ENCODE measurements at regions of chr12 and their contacts with region 1.

Region 1: DNA sequence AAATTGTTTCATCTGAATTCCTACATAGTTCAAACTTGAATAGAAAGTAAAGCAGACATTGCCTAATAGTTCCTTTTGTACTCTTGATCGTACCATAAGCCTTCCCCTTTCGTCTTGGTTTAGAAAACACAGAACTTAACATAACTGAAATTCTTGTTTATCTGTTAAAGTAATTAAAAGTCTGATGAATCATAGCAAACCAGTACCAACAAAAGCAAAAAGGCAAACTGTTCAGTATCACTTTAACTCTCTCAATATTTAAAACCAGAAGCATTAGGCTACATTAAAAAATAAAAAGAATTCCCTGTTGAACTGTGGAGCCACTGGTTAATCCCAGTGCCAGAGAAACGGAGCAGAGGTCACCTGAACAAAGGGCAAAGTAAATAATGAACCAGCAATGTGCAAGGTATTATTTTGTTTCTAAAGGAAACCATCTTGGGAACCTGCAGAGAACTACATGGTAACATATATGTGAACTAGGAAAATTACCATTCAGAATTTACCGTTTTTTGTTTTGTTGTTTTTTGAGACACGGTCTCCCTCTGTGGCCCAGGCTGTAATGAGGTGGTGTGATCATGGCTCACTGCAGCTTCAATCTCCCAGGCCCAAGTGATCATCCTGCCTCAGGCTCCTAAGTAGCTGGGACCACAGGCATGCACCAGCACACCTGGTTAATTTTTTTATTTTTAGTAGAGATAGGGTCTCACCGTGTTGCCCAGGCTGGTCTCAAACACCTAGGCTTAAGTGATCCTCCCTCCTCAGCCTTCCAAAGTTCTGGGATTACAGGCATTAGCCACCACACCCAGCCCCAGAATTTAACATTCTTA is 17.1 kb upstream of the HIGD1C start:
- DNase-seq: no peak
- H3K4me3 ChIP-seq: no peak overlapping the region
- H3K27ac ChIP-seq: peak overlapping the region; percentile 46 to 78
- H3K4me1 ChIP-seq: peaks cover 30% of the 10 kb centered on the region
- H3K27me3 ChIP-seq: no peaks in the 10 kb centered on the region
- CTCF ChIP-seq: no peak
- POLR2A ChIP-seq: no peak

Region 2: DNA sequence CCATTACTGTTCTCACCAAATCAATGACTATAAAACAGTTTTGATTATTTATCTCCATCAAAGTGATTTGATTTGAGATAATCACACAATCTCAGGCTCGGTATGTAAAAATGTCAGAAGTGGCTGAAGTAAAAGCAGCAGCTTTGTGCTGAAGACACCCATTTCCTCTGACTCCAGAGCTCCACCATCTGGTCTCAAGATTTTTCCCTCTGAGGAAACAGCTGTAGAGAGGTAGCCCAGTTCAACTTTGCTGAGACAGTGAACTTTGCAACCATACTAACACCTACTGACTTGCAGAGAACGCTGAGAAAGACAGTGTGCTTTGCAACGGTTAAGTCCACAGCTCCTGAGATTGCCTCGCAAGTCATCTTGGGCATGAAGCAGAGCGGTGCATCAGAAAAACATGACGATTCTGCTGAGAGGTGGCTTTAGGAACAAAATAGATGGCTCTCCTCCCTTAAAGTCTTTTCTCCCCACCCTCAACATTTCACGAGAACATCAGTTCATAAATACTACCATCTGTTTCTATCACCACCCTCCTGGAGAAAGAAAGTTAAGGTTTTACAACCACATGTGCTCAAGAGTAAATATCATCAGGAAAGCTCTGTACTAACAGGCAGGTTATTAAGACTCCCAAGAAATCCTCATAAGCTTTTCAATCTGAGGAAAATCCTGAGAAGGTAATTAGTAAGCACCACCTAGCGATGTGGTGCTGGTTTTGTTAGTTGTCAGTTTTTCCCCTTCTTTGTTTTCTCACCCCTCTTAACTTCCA is 52.0 kb after region 1 on chr12:
- intact Hi-C with region 1: loop called (anchors 10 kb)
- DNase-seq: peak; percentile 58
- H3K4me3 ChIP-seq: no peak overlapping the region
- H3K27ac ChIP-seq: peak overlapping the region in 1 of 2 donors; percentile 23
- H3K4me1 ChIP-seq: peaks cover 17% of the 10 kb centered on the region
- H3K27me3 ChIP-seq: no peaks in the 10 kb centered on the region
- CTCF ChIP-seq: peak in 2 of 3 experiments; percentile 7 to 42
- POLR2A ChIP-seq: no peak